Left ventricle myocardium superior (tissue), 1 donor: ENCODE measurements at regions of chr2 and their contacts with region 1.

Region 1: DNA sequence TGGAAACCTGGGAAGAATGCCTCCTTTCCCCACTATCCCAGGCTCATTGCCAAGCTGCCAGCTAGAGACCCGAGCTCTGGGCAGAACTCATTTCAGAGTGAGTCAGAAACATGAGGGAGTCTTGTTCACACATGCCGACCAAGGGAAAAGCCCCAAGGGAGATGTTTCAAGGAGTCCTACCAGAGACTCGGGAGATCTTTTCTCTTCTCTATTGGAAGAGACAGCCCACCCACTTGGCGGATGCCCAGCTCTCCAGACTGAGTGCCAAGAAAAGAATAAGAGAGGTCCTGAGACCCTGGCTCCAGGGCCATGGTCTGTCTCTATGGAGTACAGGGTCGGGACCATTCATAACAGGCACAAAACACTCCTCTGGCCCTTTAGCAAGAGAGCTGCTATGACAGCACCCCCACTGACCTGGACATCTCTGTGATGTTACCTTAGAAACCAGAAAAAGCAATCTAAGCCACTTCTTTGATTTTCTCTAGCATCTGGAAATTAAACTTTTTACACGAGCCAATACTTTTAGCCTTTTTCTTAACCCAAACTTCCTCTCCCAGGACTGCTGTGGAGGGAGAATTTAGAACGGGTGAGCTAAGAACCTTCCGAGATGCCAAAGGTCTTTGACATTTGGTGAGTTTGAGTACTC is 18.5 kb upstream of the IGFBP5 start:
- DNase-seq: peak; percentile 73
- ATAC-seq: peak; percentile 72

Region 2: DNA sequence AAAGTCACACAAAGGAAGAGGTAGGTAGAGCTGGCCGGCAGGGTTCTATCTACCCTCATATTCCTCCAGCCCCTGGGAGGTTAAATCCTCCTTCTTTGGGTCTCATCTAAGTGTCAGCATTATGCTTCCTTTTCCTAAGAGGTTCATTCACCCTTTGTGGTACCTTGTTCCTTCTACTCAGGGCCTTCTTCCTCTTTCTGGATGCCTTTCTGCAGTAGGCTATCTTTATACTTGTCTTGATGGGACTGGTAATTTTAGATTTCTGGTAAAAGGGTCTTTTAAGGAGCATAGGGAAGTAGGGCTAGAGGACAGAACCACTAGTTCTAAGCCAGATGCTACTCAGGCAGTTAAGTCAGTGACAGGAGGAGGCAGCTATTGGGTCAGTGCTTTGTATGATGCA is 159.8 kb after region 1 on chr2:
- intact Hi-C with region 1: no loop called
- DNase-seq: no peak
- ATAC-seq: no peak

Region 3: GRCh38 chr2:217510771-217511291 is 797.0 kb after region 1 on chr2:
- intact Hi-C with region 1: loop called (anchors 5 kb)
- DNase-seq: peak; percentile 36
- ATAC-seq: peak; percentile 93